Dorsolateral prefrontal cortex (tissue), 120 donors: ENCODE measurements at regions of chr10 and their contacts with region 1.

Region 1: GRCh38 chr10:123582084-123582989 is 83.8 kb upstream of the GPR26 start:
- DNase-seq: peak; percentile 50 to 90 (median 82)
- H3K4me3 ChIP-seq: no peak overlapping the region
- H3K27ac ChIP-seq: no peak overlapping the region
- H3K27me3 ChIP-seq: peaks cover 0 to 42% (median 12%) of the 10 kb centered on the region in 45 donors
- CTCF ChIP-seq: peak; percentile 63 to 95 (median 87)

Region 2: GRCh38 chr10:123782026-123782425 is 199.7 kb after region 1 on chr10:
- intact Hi-C with region 1: loop called in 1 of 2 experiments (anchors 10 kb)
- DNase-seq: no peak
- H3K4me3 ChIP-seq: no peak overlapping the region
- H3K27ac ChIP-seq: no peak overlapping the region
- H3K27me3 ChIP-seq: peaks cover 0 to 41% (median 0%) of the 10 kb centered on the region in 45 donors
- CTCF ChIP-seq: no peak